ENCODE measurements at regions of chr10 and their contacts with region 1.

Region 1: DNA sequence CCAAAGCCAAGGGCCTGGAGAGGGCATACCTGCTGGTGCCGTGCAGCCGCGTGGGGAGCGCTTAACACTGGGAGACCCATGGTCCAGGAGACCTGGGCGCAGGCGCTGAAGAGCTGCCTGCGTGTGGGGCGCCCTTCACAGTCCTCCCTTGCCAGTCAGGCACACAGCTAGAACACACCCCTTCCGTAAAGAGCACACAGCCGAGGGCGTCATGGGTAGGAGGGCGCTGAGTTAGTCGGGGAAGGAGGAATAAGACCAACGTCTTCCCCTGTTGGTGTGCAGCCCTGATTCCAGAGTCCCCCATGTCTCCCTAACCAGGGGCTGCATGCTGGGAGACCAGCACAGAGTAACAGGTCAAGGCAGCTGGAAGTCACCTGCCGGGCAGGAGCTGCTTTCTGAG is 273.9 kb downstream of the USP6NL start:
- DNase-seq: no peak
- H3K4me3 Mint-ChIP-seq: no peak overlapping the region
- H3K27ac Mint-ChIP-seq: no peak overlapping the region
- H3K4me1 Mint-ChIP-seq: peaks cover 7% of the 10 kb centered on the region
- H3K27me3 Mint-ChIP-seq: no peaks in the 10 kb centered on the region

Region 2: DNA sequence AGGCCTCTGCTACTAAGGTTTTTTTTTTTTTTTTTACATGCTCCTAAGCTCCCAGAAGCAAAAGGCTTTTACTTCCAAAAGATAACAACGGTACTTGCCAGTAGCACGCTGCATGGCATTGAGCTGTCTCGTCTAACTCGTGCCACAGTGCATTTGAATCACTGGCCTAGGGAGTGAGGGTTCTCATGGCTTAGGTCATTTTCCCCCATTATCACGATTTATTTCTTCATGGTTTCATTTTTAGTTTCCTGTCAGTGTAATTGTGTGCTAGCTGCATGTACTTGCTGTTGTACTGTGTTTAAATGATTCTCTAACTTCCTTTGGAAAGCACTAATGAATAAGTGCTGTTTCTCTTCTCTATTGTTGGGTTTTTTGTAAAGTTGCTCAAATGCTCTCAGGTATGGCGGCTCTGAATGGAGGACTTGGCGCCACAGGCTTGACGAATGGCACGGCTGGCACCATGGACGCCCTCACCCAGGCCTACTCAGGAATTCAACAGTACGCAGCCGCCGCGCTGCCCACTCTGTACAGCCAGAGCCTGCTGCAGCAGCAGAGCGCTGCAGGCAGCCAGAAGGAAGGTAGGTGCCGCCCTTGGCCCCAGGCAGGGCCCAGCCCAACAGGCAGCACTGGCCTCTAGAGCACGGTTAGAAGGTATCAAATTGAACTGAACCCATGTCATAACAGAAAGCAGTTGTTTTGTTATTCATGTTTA is 16.6 kb before region 1 on chr10:
- CTCF ChIA-PET with region 1: no interaction called
- POLR2A ChIA-PET with region 1: interaction called, 18 read pairs
- DNase-seq: peak; percentile 13
- H3K4me3 Mint-ChIP-seq: no peak overlapping the region
- H3K27ac Mint-ChIP-seq: peak overlapping the region; percentile 77
- H3K4me1 Mint-ChIP-seq: peaks cover 64% of the 10 kb centered on the region
- H3K27me3 Mint-ChIP-seq: no peaks in the 10 kb centered on the region

Region 3: DNA sequence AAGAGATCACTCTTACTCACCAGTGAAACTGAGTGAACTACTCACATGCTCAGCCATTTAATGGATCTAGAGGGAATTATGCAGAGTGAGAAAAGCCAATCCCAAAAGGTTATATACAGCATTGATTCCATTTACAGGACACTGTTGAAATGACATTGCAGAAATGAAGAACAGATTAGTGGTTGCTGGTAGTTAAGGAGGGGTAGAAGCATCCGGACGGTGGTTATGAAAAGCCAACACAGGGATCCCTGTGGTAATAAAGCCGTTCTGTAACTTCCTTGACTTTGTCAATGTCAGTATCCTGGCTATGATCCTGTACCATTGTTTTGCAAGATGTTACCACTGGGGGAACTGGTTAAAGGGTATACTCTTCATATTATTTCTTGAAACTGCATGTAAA is 20.5 kb after region 1 on chr10:
- CTCF ChIA-PET with region 1: no interaction called
- POLR2A ChIA-PET with region 1: no interaction called
- DNase-seq: no peak
- H3K4me3 Mint-ChIP-seq: no peak overlapping the region
- H3K27ac Mint-ChIP-seq: no peak overlapping the region
- H3K4me1 Mint-ChIP-seq: peaks cover 2% of the 10 kb centered on the region
- H3K27me3 Mint-ChIP-seq: no peaks in the 10 kb centered on the region

Region 4: GRCh38 chr10:11424456-11425297 is 87.2 kb after region 1 on chr10:
- CTCF ChIA-PET with region 1: no interaction called
- POLR2A ChIA-PET with region 1: no interaction called
- DNase-seq: no peak
- H3K4me3 Mint-ChIP-seq: no peak overlapping the region
- H3K27ac Mint-ChIP-seq: no peak overlapping the region
- H3K4me1 Mint-ChIP-seq: peaks cover 6% of the 10 kb centered on the region
- H3K27me3 Mint-ChIP-seq: peaks cover 5% of the 10 kb centered on the region

Region 5: GRCh38 chr10:11499425-11500071 is 162.0 kb after region 1 on chr10:
- CTCF ChIA-PET with region 1: no interaction called
- POLR2A ChIA-PET with region 1: no interaction called
- DNase-seq: no peak
- H3K4me3 Mint-ChIP-seq: no peak overlapping the region
- H3K27ac Mint-ChIP-seq: no peak overlapping the region
- H3K4me1 Mint-ChIP-seq: peaks cover 6% of the 10 kb centered on the region
- H3K27me3 Mint-ChIP-seq: no peaks in the 10 kb centered on the region